Naive thymus-derived CD4-positive, alpha-beta T cell (primary cell): ENCODE measurements at regions of chr3 and their contacts with region 1.

Region 1: GRCh38 chr3:15629860-15630597 is 28.5 kb downstream of the BTD start:
- DNase-seq: peak in 8 of 9 donors; percentile 45 to 79 (median 66)
- ATAC-seq: peak; percentile 99
- H3K4me3 ChIP-seq: no peak overlapping the region
- H3K4me3 Mint-ChIP-seq: peak overlapping the region in 8 of 10 donors; percentile 33 to 71 (median 61)
- H3K27ac ChIP-seq: no peak overlapping the region
- H3K27ac Mint-ChIP-seq: peak overlapping the region in 1 of 9 donors; percentile 62
- H3K4me1 ChIP-seq: peaks cover 6 to 8% of the 10 kb centered on the region in 2 donors
- H3K4me1 Mint-ChIP-seq: peaks cover 14 to 49% (median 34%) of the 10 kb centered on the region in 7 donors
- H3K27me3 ChIP-seq: no peaks in the 10 kb centered on the region
- H3K27me3 Mint-ChIP-seq: no peaks in the 10 kb centered on the region

Region 2: GRCh38 chr3:15667484-15667883 is 37.5 kb after region 1 on chr3:
- CTCF ChIA-PET with region 1: interaction called, 3 read pairs
- POLR2A ChIA-PET with region 1: interaction called, 3 read pairs
- intact Hi-C with region 1: loop called in 1 of 2 experiments (anchors 2 kb)
- DNase-seq: peak in 7 of 9 donors; percentile 18 to 54 (median 28)
- ATAC-seq: peak; percentile 93
- H3K4me3 ChIP-seq: no peak overlapping the region
- H3K4me3 Mint-ChIP-seq: peak overlapping the region in 8 of 10 donors; percentile 13 to 37 (median 28)
- H3K27ac ChIP-seq: no peak overlapping the region
- H3K27ac Mint-ChIP-seq: peak overlapping the region in 2 of 9 donors; percentile 33 to 39
- H3K4me1 ChIP-seq: peaks cover 15 to 16% of the 10 kb centered on the region in 2 donors
- H3K4me1 Mint-ChIP-seq: peaks cover 6 to 33% (median 23%) of the 10 kb centered on the region in 7 donors
- H3K27me3 ChIP-seq: no peaks in the 10 kb centered on the region
- H3K27me3 Mint-ChIP-seq: no peaks in the 10 kb centered on the region

Region 3: GRCh38 chr3:15722877-15723620 is 93.0 kb after region 1 on chr3:
- CTCF ChIA-PET with region 1: no interaction called
- POLR2A ChIA-PET with region 1: no interaction called
- intact Hi-C with region 1: loop called in 1 of 2 experiments (anchors 5 kb)
- DNase-seq: no peak
- ATAC-seq: no peak
- H3K4me3 ChIP-seq: no peak overlapping the region
- H3K4me3 Mint-ChIP-seq: no peak overlapping the region
- H3K27ac ChIP-seq: no peak overlapping the region
- H3K27ac Mint-ChIP-seq: no peak overlapping the region
- H3K4me1 ChIP-seq: no peaks in the 10 kb centered on the region
- H3K4me1 Mint-ChIP-seq: peaks cover 0 to 16% (median 0%) of the 10 kb centered on the region in 7 donors
- H3K27me3 ChIP-seq: no peaks in the 10 kb centered on the region
- H3K27me3 Mint-ChIP-seq: no peaks in the 10 kb centered on the region

Region 4: GRCh38 chr3:15815696-15816095 is 185.7 kb after region 1 on chr3:
- CTCF ChIA-PET with region 1: interaction called, 13 read pairs
- POLR2A ChIA-PET with region 1: interaction called, 3 read pairs
- intact Hi-C with region 1: loop called (anchors 1 kb)
- DNase-seq: peak in 6 of 9 donors; percentile 12 to 48 (median 28)
- ATAC-seq: peak; percentile 53
- H3K4me3 ChIP-seq: no peak overlapping the region
- H3K4me3 Mint-ChIP-seq: no peak overlapping the region
- H3K27ac ChIP-seq: no peak overlapping the region
- H3K27ac Mint-ChIP-seq: peak overlapping the region in 1 of 9 donors; percentile 59
- H3K4me1 ChIP-seq: peaks cover 0 to 8% of the 10 kb centered on the region in 2 donors
- H3K4me1 Mint-ChIP-seq: peaks cover 6 to 47% (median 43%) of the 10 kb centered on the region in 7 donors
- H3K27me3 ChIP-seq: no peaks in the 10 kb centered on the region
- H3K27me3 Mint-ChIP-seq: no peaks in the 10 kb centered on the region

Region 5: GRCh38 chr3:15953841-15954240 is 323.8 kb after region 1 on chr3:
- CTCF ChIA-PET with region 1: interaction called, 4 read pairs
- POLR2A ChIA-PET with region 1: no interaction called
- intact Hi-C with region 1: loop called in 1 of 2 experiments (anchors 1 kb)
- DNase-seq: peak in 3 of 9 donors; percentile 3 to 15 (median 7)
- ATAC-seq: no peak
- H3K4me3 ChIP-seq: no peak overlapping the region
- H3K4me3 Mint-ChIP-seq: no peak overlapping the region
- H3K27ac ChIP-seq: no peak overlapping the region
- H3K27ac Mint-ChIP-seq: no peak overlapping the region
- H3K4me1 ChIP-seq: no peaks in the 10 kb centered on the region
- H3K4me1 Mint-ChIP-seq: no peaks in the 10 kb centered on the region
- H3K27me3 ChIP-seq: no peaks in the 10 kb centered on the region
- H3K27me3 Mint-ChIP-seq: peaks cover 0 to 4% (median 0%) of the 10 kb centered on the region in 5 donors

Region 6: DNA sequence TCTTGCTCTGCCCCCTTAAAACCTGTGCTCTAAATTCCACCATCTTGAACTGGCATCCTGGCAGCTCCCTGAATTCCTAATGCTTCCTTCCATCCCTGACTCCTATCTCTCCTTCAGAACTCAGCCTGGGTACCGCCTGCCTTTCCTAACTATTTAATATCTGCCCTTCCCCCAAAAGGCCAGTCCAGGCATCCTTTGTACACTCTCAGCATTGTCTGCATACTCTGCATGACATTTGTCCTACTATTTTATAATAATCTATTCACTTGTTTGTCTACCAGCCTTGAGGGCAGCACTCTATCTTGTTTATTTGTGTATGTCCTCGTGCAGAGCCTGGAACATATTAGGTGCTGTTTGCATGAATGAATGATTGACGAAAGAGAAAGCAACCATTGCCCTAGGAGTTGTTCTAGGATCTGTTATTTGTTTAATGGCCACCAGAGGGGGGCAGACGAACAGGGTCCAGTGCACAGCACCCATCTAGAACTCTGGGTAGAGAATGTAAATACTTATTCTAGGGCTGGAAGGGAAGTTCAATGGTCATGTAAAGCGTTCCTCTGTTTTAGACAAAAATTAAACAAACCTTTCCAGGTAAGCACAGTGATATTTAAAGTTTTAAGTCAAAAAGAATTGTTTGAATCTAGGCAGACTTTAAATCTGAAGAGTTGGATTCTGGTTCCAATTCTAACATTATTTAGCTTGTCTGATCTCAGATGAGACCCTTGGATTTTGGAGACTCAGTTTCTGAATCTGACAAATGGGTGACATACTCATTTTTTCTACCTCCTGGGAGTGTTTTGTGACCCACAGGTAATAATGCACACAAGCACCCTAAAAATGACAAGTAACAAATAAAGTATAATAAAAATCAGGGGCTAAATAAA is 418.6 kb after region 1 on chr3:
- CTCF ChIA-PET with region 1: no interaction called
- POLR2A ChIA-PET with region 1: no interaction called
- intact Hi-C with region 1: loop called (anchors 1 to 10 kb)
- DNase-seq: peak in 7 of 9 donors; percentile 11 to 53 (median 43)
- ATAC-seq: peak; percentile 92
- H3K4me3 ChIP-seq: no peak overlapping the region
- H3K4me3 Mint-ChIP-seq: peak overlapping the region in 5 of 10 donors; percentile 4 to 72 (median 48)
- H3K27ac ChIP-seq: no peak overlapping the region
- H3K27ac Mint-ChIP-seq: no peak overlapping the region
- H3K4me1 ChIP-seq: no peaks in the 10 kb centered on the region
- H3K4me1 Mint-ChIP-seq: peaks cover 0 to 5% (median 4%) of the 10 kb centered on the region in 7 donors
- H3K27me3 ChIP-seq: no peaks in the 10 kb centered on the region
- H3K27me3 Mint-ChIP-seq: peaks cover 0 to 5% (median 0%) of the 10 kb centered on the region in 5 donors

Region 7: GRCh38 chr3:16247276-16248061 is 617.4 kb after region 1 on chr3:
- CTCF ChIA-PET with region 1: no interaction called
- POLR2A ChIA-PET with region 1: no interaction called
- intact Hi-C with region 1: loop called (anchors 1 to 2 kb)
- DNase-seq: peak; percentile 55 to 80 (median 72)
- ATAC-seq: peak; percentile 93
- H3K4me3 ChIP-seq: no peak overlapping the region
- H3K4me3 Mint-ChIP-seq: peak overlapping the region in 3 of 10 donors; percentile 4 to 37 (median 21)
- H3K27ac ChIP-seq: no peak overlapping the region
- H3K27ac Mint-ChIP-seq: peak overlapping the region in 2 of 9 donors; percentile 7 to 41
- H3K4me1 ChIP-seq: no peaks in the 10 kb centered on the region
- H3K4me1 Mint-ChIP-seq: peaks cover 0 to 32% (median 8%) of the 10 kb centered on the region in 7 donors
- H3K27me3 ChIP-seq: no peaks in the 10 kb centered on the region
- H3K27me3 Mint-ChIP-seq: no peaks in the 10 kb centered on the region